ENCODE measurements at regions of chr5 and their contacts with region 1.

Region 1: GRCh38 chr5:38086777-38087176 is 171.6 kb upstream of the EGFLAM start:
- DNase-seq: no peak
- ATAC-seq: no peak
- H3K4me3 ChIP-seq: no peak overlapping the region
- H3K27ac ChIP-seq: no peak overlapping the region
- H3K4me1 ChIP-seq: no peaks in the 10 kb centered on the region
- H3K27me3 ChIP-seq: peaks cover 0 to 15% (median 0%) of the 10 kb centered on the region in 7 donors
- CTCF ChIP-seq: no peak

Region 2: DNA sequence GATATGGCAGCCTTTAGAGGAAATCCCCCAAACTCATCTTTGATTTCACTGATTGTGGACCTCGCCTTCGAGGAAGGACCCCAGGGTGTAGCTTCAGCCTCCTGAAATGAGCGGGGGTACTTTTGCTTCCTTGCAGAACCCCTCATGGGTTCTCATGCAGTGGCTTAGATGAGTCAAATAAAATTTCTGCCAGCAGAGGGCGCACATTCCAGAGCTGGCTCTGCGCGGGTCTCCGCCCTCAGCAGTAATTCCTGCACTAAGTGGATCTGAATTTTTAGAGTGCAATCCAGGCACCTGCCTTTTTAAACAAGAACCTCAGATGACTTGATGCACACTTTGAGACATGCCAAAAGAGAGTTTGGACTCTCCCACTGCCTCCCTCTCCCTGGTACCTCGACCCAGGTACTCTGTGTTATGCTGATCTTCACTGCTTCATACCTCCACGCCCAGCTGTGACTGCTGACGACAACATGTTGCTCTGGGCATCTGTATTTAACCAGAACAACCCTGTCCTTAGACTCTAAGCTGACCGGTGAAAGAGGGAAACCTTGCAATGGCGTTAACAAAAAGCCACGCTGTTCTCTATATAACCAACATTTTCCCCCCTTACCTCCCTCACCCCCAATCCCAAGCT is 178.9 kb after region 1 on chr5:
- intact Hi-C with region 1: no loop called
- DNase-seq: peak; percentile 27 to 67
- ATAC-seq: peak; percentile 70 to 84 (median 76)
- H3K4me3 ChIP-seq: no peak overlapping the region
- H3K27ac ChIP-seq: peak overlapping the region in 1 of 10 donors; percentile 6
- H3K4me1 ChIP-seq: peaks cover 0 to 11% (median 0%) of the 10 kb centered on the region in 9 donors
- H3K27me3 ChIP-seq: peaks cover 0 to 74% (median 45%) of the 10 kb centered on the region in 7 donors
- CTCF ChIP-seq: peak; percentile 56 to 86 (median 75)

Region 3: GRCh38 chr5:38639377-38640332 is 552.9 kb after region 1 on chr5:
- intact Hi-C with region 1: loop called in 1 of 10 experiments (anchors 5 kb)
- DNase-seq: no peak
- ATAC-seq: no peak
- H3K4me3 ChIP-seq: no peak overlapping the region
- H3K27ac ChIP-seq: no peak overlapping the region
- H3K4me1 ChIP-seq: peaks cover 0 to 9% (median 0%) of the 10 kb centered on the region in 9 donors
- H3K27me3 ChIP-seq: no peaks in the 10 kb centered on the region
- CTCF ChIP-seq: no peak

Region 4: GRCh38 chr5:38724301-38725030 is 637.7 kb after region 1 on chr5:
- intact Hi-C with region 1: no loop called
- DNase-seq: no peak
- ATAC-seq: peak in 1 of 8 donors; percentile 59
- H3K4me3 ChIP-seq: no peak overlapping the region
- H3K27ac ChIP-seq: no peak overlapping the region
- H3K4me1 ChIP-seq: peaks cover 0 to 4% (median 0%) of the 10 kb centered on the region in 9 donors
- H3K27me3 ChIP-seq: no peaks in the 10 kb centered on the region
- CTCF ChIP-seq: no peak

Measured in heart right ventricle (tissue), 16 donors.